Activated CD8-positive, alpha-beta memory T cell treated with anti-CD3 and anti-CD28 coated beads, Interleukin-2, amount 10 ng/mL, durations not matched to agents 7 days and 5 days (primary cell): ENCODE measurements at regions of chr1 and their contacts with region 1.

Region 1: GRCh38 chr1:167599957-167600581 is 30.0 kb upstream of the RCSD1 start:
- DNase-seq: peak; percentile 63
- ATAC-seq: peak; percentile 90
- H3K4me3 Mint-ChIP-seq: peak overlapping the region; percentile 58
- H3K27ac Mint-ChIP-seq: peak overlapping the region; percentile 77
- H3K4me1 Mint-ChIP-seq: peaks cover 38% of the 10 kb centered on the region
- H3K27me3 Mint-ChIP-seq: no peaks in the 10 kb centered on the region

Region 2: DNA sequence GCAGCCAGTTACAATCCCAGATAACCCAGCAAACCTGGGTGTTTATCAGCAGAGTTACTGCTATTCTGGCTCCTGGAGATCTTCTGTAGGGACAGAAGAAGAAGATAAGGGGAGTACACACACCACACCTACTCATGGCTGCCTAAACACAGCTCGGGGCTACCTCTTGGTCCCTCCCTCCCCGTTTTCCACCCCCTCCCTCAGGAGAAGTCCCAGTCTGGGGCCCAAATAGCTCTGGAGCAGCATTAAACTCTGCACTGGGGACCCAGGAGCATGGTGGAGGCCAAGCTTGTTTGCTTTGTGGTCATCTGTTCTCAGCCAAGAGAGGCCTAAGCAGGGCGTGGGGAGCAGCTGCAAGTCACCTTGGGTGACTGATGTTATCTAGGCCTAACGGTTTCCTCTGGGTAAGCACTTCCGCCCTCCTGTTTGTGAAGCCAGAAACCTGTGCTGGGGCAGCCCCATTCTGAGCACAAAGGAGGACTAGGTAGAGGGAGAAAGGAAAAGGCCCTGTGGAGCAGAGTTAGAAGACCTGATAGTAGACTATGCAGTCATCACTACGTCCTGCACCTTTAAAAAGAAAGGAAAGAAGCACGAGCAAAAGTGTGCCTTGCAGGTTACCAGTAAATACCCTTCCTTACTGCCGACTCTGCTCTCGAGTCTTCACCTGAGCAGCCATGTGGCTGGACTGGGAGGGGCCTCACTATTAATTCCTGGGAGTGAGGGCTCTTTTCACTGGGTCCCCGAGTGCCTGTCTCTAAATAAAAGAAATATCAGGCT is 28.0 kb after region 1 on chr1:
- CTCF ChIA-PET with region 1: interaction called, 50 read pairs
- DNase-seq: peak; percentile 93
- ATAC-seq: peak; percentile 82
- H3K4me3 Mint-ChIP-seq: peak overlapping the region; percentile 83
- H3K27ac Mint-ChIP-seq: peak overlapping the region; percentile 98
- H3K4me1 Mint-ChIP-seq: peaks cover 55% of the 10 kb centered on the region
- H3K27me3 Mint-ChIP-seq: no peaks in the 10 kb centered on the region

Region 3: GRCh38 chr1:167641786-167642500 is 41.9 kb after region 1 on chr1:
- CTCF ChIA-PET with region 1: interaction called, 53 read pairs
- DNase-seq: no peak
- ATAC-seq: peak; percentile 35
- H3K4me3 Mint-ChIP-seq: no peak overlapping the region
- H3K27ac Mint-ChIP-seq: peak overlapping the region; percentile 54
- H3K4me1 Mint-ChIP-seq: peaks cover 85% of the 10 kb centered on the region
- H3K27me3 Mint-ChIP-seq: no peaks in the 10 kb centered on the region

Region 4: GRCh38 chr1:167681451-167682098 is 81.5 kb after region 1 on chr1:
- CTCF ChIA-PET with region 1: interaction called, 84 read pairs
- DNase-seq: no peak
- ATAC-seq: no peak
- H3K4me3 Mint-ChIP-seq: no peak overlapping the region
- H3K27ac Mint-ChIP-seq: no peak overlapping the region
- H3K4me1 Mint-ChIP-seq: peaks cover 5% of the 10 kb centered on the region
- H3K27me3 Mint-ChIP-seq: no peaks in the 10 kb centered on the region

Region 5: GRCh38 chr1:167715157-167715999 is 115.3 kb after region 1 on chr1:
- CTCF ChIA-PET with region 1: interaction called, 16 read pairs
- DNase-seq: peak; percentile 93
- ATAC-seq: peak; percentile 57
- H3K4me3 Mint-ChIP-seq: peak overlapping the region; percentile 80
- H3K27ac Mint-ChIP-seq: peak overlapping the region; percentile 93
- H3K4me1 Mint-ChIP-seq: peaks cover 29% of the 10 kb centered on the region
- H3K27me3 Mint-ChIP-seq: peaks cover 15% of the 10 kb centered on the region

Region 6: DNA sequence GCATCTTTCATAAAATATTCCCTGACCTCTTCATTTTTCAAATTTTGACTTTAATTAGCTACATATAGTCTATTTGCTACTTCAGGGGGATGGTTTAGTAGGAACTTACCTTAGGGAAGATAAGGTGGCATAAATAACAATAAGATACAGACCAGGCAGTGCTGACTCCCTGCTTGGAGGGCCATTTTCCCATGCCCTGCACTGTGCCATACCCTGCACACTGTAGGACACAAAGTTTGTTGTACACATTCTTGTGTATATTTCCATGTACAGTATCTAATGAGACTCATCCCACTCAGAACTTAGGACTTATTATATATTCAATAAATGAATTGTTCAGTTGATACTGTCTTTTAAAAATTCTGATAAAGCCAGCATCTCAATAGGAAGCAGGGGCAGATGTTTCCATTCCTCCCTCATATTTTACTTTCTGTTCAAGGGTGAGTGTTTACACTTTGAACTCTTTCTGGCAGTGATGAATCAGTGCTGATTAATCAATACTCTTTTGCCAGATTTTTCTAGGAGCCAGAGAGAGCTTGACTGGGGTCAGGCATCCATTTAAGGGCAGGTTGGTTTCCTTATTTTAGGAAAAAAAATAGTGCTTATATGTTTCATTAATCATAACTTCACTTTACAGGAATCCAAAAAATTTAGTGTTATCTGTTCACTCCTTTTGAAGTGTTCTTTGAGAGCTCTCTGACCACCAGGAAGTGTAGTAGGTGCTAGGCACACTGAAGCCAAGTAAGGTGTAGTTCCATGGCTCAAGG is 152.3 kb after region 1 on chr1:
- CTCF ChIA-PET with region 1: no interaction called
- DNase-seq: no peak
- ATAC-seq: no peak
- H3K4me3 Mint-ChIP-seq: no peak overlapping the region
- H3K27ac Mint-ChIP-seq: no peak overlapping the region
- H3K4me1 Mint-ChIP-seq: peaks cover 5% of the 10 kb centered on the region
- H3K27me3 Mint-ChIP-seq: no peaks in the 10 kb centered on the region

Region 7: DNA sequence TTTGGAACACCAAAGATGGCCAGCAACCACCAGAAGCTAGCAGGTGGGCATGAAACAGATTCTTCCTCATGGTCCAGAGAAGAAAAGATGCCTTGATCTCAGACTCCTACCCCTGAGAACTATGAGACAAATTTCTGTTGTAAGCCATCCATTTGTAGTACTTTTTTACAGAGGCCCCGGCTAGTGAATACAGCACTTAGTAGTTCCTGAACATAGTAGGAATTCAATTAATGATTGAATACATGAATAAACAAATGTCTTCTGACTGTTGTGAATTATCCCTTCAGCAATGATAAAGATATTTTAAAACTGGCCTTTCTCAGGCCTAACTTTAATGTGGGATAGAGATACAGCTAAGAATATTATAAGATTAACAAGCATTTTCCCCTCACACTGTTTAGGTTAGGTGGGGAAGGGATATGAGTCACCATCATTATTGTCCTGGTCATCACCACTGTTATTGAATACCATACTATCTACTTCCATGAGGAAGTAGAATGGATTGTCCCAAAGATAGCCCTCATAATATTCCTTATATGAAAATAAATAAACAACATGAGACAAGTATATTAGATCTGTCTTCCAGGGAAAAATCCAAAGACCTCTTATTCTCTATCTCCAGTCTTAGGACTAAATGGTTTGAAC is 262.5 kb after region 1 on chr1:
- CTCF ChIA-PET with region 1: no interaction called
- DNase-seq: no peak
- ATAC-seq: no peak
- H3K4me3 Mint-ChIP-seq: no peak overlapping the region
- H3K27ac Mint-ChIP-seq: no peak overlapping the region
- H3K4me1 Mint-ChIP-seq: no peaks in the 10 kb centered on the region
- H3K27me3 Mint-ChIP-seq: no peaks in the 10 kb centered on the region